SK-N-SH (cell line): ENCODE measurements at regions of chr2 and their contacts with region 1.

Region 1: GRCh38 chr2:60998628-60999545 is 18.6 kb upstream of the PEX13 start:
- DNase-seq: peak; percentile 52
- H3K4me3 ChIP-seq: peak overlapping the region in 1 of 2 experiments; percentile 21; a peak in 1 of 4 replicates
- H3K27ac ChIP-seq: no peak overlapping the region
- H3K4me1 ChIP-seq: no peaks in the 10 kb centered on the region
- H3K27me3 ChIP-seq: no peaks in the 10 kb centered on the region
- CTCF ChIP-seq: peak; percentile 78
- EP300 ChIP-seq: no peak
- RAD21 ChIP-seq: peak; percentile 88

Region 2: DNA sequence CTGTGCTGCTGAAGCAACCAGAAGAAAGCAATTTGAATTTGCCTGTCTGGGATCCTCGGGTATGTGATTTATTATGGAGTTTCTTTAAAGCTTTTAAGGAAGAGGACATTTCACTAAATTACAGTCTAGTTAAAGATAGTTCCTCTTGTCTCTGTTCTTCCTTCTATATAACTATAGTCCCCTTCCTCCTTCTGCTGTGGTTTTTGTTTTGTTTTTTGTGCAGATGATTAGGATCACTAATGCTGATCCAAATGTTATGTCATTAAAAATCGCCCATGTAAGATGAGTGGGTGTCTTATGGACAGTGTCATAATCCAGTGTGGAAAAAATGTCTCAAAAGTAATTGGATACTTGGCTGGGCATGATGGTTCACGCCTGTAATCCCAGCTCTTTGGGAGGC is 218.2 kb before region 1 on chr2:
- CTCF ChIA-PET with region 1: interaction called, 16 read pairs
- POLR2A ChIA-PET with region 1: no interaction called
- DNase-seq: no peak
- H3K4me3 ChIP-seq: no peak overlapping the region
- H3K27ac ChIP-seq: no peak overlapping the region
- H3K4me1 ChIP-seq: no peaks in the 10 kb centered on the region
- H3K27me3 ChIP-seq: no peaks in the 10 kb centered on the region
- CTCF ChIP-seq: no peak
- EP300 ChIP-seq: no peak
- RAD21 ChIP-seq: no peak

Region 3: DNA sequence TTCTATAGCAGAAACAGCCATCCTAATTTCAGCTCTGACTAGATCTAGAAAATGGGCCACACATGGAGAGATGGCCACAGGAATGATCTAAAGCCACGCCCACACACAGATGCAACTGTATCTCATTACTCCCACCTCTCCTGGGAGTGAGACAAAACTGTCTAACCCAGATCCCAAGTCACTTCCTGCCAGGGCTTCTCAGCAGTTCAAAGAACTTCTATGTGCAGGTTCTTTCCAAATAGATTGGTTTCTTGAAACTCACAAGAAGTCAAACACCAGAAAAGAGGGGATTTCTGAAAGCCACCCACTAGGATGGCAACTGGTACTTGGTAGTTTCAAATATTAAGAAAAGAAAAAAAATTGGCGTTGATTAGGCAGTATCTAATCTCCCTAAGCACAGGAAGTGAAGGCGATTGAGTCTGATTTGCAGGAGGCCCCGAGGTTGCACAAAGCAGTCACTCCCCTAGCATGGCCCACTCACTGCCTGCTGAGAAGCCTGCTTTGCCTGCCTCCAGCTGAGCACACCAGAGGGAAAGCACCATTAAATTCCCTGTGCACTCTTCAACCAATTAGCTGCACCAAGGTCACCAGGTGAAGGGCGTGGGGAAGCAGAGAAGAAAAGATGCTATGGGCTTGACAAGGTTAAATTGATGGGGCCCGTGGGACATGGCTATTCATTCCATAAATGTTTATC is 191.8 kb before region 1 on chr2:
- CTCF ChIA-PET with region 1: interaction called, 23 read pairs
- POLR2A ChIA-PET with region 1: no interaction called
- DNase-seq: peak; percentile 41
- H3K4me3 ChIP-seq: no peak overlapping the region
- H3K27ac ChIP-seq: no peak overlapping the region
- H3K4me1 ChIP-seq: peaks cover 7 to 14% of the 10 kb centered on the region in 2 experiments; a peak in 2 of 4 replicates
- H3K27me3 ChIP-seq: no peaks in the 10 kb centered on the region
- CTCF ChIP-seq: no peak
- EP300 ChIP-seq: no peak
- RAD21 ChIP-seq: no peak

Region 4: GRCh38 chr2:60976875-60977561 is 21.9 kb before region 1 on chr2:
- CTCF ChIA-PET with region 1: interaction called, 13 read pairs
- POLR2A ChIA-PET with region 1: no interaction called
- DNase-seq: no peak
- H3K4me3 ChIP-seq: no peak overlapping the region
- H3K27ac ChIP-seq: no peak overlapping the region
- H3K4me1 ChIP-seq: no peaks in the 10 kb centered on the region; a peak in 1 of 4 replicates
- H3K27me3 ChIP-seq: no peaks in the 10 kb centered on the region
- CTCF ChIP-seq: no peak
- EP300 ChIP-seq: no peak
- RAD21 ChIP-seq: no peak

Region 5: GRCh38 chr2:61011678-61012077 is 12.8 kb after region 1 on chr2:
- CTCF ChIA-PET with region 1: interaction called, 20 read pairs
- POLR2A ChIA-PET with region 1: no interaction called
- DNase-seq: no peak
- H3K4me3 ChIP-seq: no peak overlapping the region
- H3K27ac ChIP-seq: peak overlapping the region; percentile 39 to 70; a peak in 3 of 4 replicates
- H3K4me1 ChIP-seq: peaks cover 0 to 6% of the 10 kb centered on the region in 2 experiments; a peak in 2 of 4 replicates
- H3K27me3 ChIP-seq: no peaks in the 10 kb centered on the region
- CTCF ChIP-seq: no peak
- EP300 ChIP-seq: no peak
- RAD21 ChIP-seq: no peak